Left lung (tissue), 14 donors: ENCODE measurements at regions of chr13 and their contacts with region 1.

Region 1: GRCh38 chr13:112873851-112874750 is 94.9 kb upstream of the MCF2L start:
- DNase-seq: peak; percentile 66 to 92 (median 74)
- ATAC-seq: peak; percentile 91
- H3K4me3 ChIP-seq: no peak overlapping the region
- H3K27ac ChIP-seq: peak overlapping the region in 1 of 2 donors; percentile 68
- H3K4me1 ChIP-seq: peaks cover 0 to 11% of the 10 kb centered on the region in 2 donors
- H3K27me3 ChIP-seq: no peaks in the 10 kb centered on the region
- CTCF ChIP-seq: peak; percentile 86 to 90

Region 2: DNA sequence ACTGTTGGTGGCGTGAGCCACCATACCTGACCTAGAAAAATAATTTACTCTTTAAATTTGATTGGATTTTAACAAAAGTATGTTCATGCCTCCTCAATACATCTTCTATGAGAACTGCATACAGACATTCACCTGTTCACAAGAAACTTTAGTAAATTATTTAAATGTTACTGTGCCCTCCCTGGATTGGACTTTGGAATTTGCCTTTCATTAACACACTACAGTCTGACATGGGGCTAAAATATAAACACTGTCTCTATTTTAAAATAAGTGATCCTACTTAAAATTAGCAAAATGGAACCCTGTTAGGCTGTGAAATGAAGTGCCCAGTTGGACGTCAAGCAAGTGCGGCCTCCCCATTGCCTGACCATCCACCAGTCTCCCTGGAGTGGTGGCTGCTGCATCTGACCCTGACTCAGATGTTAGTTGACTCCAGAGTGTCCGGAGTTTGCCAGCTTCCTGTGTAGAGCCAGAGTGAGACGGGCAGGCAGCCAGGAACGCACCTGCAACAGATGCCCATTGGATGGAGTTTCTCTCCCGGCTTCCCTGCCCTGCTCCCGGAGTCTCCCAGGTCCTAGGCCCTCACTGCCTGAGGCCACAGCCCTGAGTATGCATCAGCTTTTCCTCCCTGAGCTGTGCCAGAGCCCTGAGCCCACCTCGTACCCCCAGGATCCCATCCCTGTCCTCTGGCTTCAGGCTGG is 230.2 kb before region 1 on chr13:
- intact Hi-C with region 1: loop called in 1 of 2 experiments (anchors 10 kb)
- DNase-seq: peak in 2 of 4 donors; percentile 80 to 85
- ATAC-seq: peak; percentile 85
- H3K4me3 ChIP-seq: no peak overlapping the region
- H3K27ac ChIP-seq: no peak overlapping the region
- H3K4me1 ChIP-seq: peaks cover 0 to 5% of the 10 kb centered on the region in 2 donors
- H3K27me3 ChIP-seq: peaks cover 10 to 14% of the 10 kb centered on the region in 2 donors
- CTCF ChIP-seq: no peak

Region 3: DNA sequence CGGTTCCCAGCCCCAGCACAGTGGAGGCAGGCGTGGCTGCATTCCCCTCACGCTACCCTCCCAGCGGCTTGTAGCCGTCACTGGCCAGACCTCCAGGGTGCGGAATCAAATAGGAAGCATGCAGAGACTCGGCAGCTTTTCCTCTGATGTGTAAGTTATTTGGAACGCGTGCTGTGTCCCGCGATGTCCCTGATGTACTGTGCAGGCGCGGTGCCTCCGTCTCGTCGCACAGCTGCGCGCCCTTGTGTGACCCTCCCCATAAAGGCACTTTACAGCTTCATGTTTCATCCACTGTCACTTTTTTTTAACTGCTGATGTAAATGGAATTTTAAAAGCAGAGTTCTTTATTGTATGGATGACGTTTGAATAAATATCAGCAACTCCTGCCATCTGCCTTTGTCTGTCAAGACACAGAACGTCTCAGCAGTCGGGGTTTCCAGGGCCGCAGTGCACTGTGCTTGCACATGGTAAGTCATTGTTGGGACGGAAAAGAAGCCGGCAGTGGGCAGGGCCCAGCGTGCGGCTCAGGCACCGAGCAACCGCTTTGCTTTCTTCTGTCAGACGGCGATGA is 224.1 kb after region 1 on chr13:
- intact Hi-C with region 1: no loop called
- DNase-seq: peak in 2 of 4 donors; percentile 25 to 76
- ATAC-seq: peak; percentile 11
- H3K4me3 ChIP-seq: no peak overlapping the region
- H3K27ac ChIP-seq: no peak overlapping the region
- H3K4me1 ChIP-seq: no peaks in the 10 kb centered on the region
- H3K27me3 ChIP-seq: peaks cover 0 to 6% of the 10 kb centered on the region in 2 donors
- CTCF ChIP-seq: no peak